Dorsolateral prefrontal cortex (tissue), 120 donors: ENCODE measurements at regions of chr2 and their contacts with region 1.

Region 1: DNA sequence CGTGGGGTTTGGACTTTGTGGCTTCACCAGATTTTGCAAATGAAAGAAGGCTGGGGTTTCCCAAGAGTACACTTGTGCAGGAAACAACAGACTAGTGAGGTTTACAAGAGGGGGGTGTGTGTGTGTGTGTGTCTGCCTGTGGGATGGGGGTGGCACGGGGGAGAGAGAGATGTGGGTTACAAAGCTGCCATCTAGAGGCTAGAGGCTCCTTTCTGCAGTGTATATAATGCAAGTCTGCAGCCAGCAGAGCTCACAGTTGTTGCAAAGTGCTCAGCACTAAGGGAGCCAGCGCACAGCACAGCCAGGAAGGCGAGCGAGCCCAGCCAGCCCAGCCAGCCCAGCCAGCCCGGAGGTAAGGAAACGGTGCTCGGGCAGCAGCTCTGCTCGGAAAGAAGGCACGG is at the start of gene ACKR3:
- DNase-seq: peak; percentile 31 to 84 (median 74)
- H3K4me3 ChIP-seq: peak within 1 kb of the TSS; percentile 25 to 73 (median 54)
- H3K27ac ChIP-seq: peak within 1 kb of the TSS in 48 of 59 donors; percentile 4 to 89 (median 72)
- H3K27me3 ChIP-seq: peaks cover 0 to 14% (median 0%) of the 10 kb centered on the region in 45 donors
- CTCF ChIP-seq: peak; percentile 4 to 72 (median 55)
- total RNA-seq, gene ACKR3: 4.7 to 29.3 (median 11.7) TPM

Region 2: GRCh38 chr2:236343400-236344161 is 226.0 kb before region 1 on chr2:
- intact Hi-C with region 1: loop called in 1 of 2 experiments (anchors 10 kb)
- DNase-seq: peak in 6 of 10 donors; percentile 41 to 91 (median 66)
- H3K4me3 ChIP-seq: no peak overlapping the region
- H3K27ac ChIP-seq: peak overlapping the region in 6 of 59 donors; percentile 0 to 67 (median 35)
- H3K27me3 ChIP-seq: no peaks in the 10 kb centered on the region
- CTCF ChIP-seq: peak; percentile 61 to 91 (median 84)

Region 3: GRCh38 chr2:236352761-236353593 is 216.6 kb before region 1 on chr2:
- intact Hi-C with region 1: loop called (anchors 5 to 10 kb)
- DNase-seq: peak in 1 of 10 donors; percentile 48
- H3K4me3 ChIP-seq: peak overlapping the region in 1 of 59 donors; percentile 21
- H3K27ac ChIP-seq: no peak overlapping the region
- H3K27me3 ChIP-seq: no peaks in the 10 kb centered on the region
- CTCF ChIP-seq: peak; percentile 71 to 93 (median 86)

Region 4: GRCh38 chr2:236512902-236513435 is 56.6 kb before region 1 on chr2:
- intact Hi-C with region 1: loop called in 1 of 2 experiments (anchors 5 kb)
- DNase-seq: peak in 8 of 10 donors; percentile 36 to 68 (median 51)
- H3K4me3 ChIP-seq: no peak overlapping the region
- H3K27ac ChIP-seq: no peak overlapping the region
- H3K27me3 ChIP-seq: no peaks in the 10 kb centered on the region
- CTCF ChIP-seq: peak; percentile 28 to 92 (median 80)